Activated T-helper 2 cell treated with anti-CD3 and anti-CD28 coated beads, Interferon-gamma antibody, Interleukin-2, Interleukin-4, amounts not matched to agents 10 μg/mL and 5 μg/mL and 100 μg/mL, durations not matched to agents 14 hours and 24 hours and 36 hours (primary cell): ENCODE measurements at regions of chr20 and their contacts with region 1.

Region 1: GRCh38 chr20:54095824-54096223 is 25.4 kb upstream of the BCAS1 start:
- DNase-seq: no peak
- H3K4me3 Mint-ChIP-seq: no peak overlapping the region
- H3K27ac Mint-ChIP-seq: no peak overlapping the region
- H3K4me1 Mint-ChIP-seq: peaks cover 4% of the 10 kb centered on the region
- H3K27me3 Mint-ChIP-seq: peaks cover 15% of the 10 kb centered on the region

Region 2: GRCh38 chr20:54199721-54200176 is 103.9 kb after region 1 on chr20:
- intact Hi-C with region 1: loop called (anchors 1 kb)
- DNase-seq: peak; percentile 48
- H3K4me3 Mint-ChIP-seq: no peak overlapping the region
- H3K27ac Mint-ChIP-seq: no peak overlapping the region
- H3K4me1 Mint-ChIP-seq: no peaks in the 10 kb centered on the region
- H3K27me3 Mint-ChIP-seq: peaks cover 5% of the 10 kb centered on the region

Region 3: GRCh38 chr20:54649511-54649962 is 553.7 kb after region 1 on chr20:
- intact Hi-C with region 1: loop called (anchors 1 kb)
- DNase-seq: peak; percentile 34
- H3K4me3 Mint-ChIP-seq: no peak overlapping the region
- H3K27ac Mint-ChIP-seq: no peak overlapping the region
- H3K4me1 Mint-ChIP-seq: no peaks in the 10 kb centered on the region
- H3K27me3 Mint-ChIP-seq: peaks cover 2% of the 10 kb centered on the region